ENCODE measurements at regions of chr17 and their contacts with region 1.

Region 1: GRCh38 chr17:59311130-59311920 is 20.1 kb upstream of the YPEL2 start:
- DNase-seq: peak in 1 of 2 donors; percentile 13
- H3K4me3 ChIP-seq: no peak overlapping the region
- H3K27ac ChIP-seq: no peak overlapping the region
- H3K4me1 ChIP-seq: no peaks in the 10 kb centered on the region
- H3K27me3 ChIP-seq: no peaks in the 10 kb centered on the region
- CTCF ChIP-seq: peak; percentile 48 to 95 (median 88)
- POLR2A ChIP-seq: no peak

Region 2: GRCh38 chr17:59406808-59407429 is 95.6 kb after region 1 on chr17:
- intact Hi-C with region 1: no loop called
- DNase-seq: peak; percentile 75 to 77
- H3K4me3 ChIP-seq: no peak overlapping the region
- H3K27ac ChIP-seq: peak overlapping the region; percentile 65 to 85 (median 77)
- H3K4me1 ChIP-seq: peaks cover 29 to 32% of the 10 kb centered on the region in 2 donors
- H3K27me3 ChIP-seq: no peaks in the 10 kb centered on the region
- CTCF ChIP-seq: peak in 1 of 6 experiments; percentile 7
- POLR2A ChIP-seq: peak in 1 of 2 donors; percentile 19

Region 3: GRCh38 chr17:59440784-59441441 is 129.6 kb after region 1 on chr17:
- intact Hi-C with region 1: loop called (anchors 2 kb)
- DNase-seq: peak; percentile 91 to 94
- H3K4me3 ChIP-seq: no peak overlapping the region
- H3K27ac ChIP-seq: peak overlapping the region; percentile 34 to 89 (median 86)
- H3K4me1 ChIP-seq: peaks cover 18 to 23% of the 10 kb centered on the region in 2 donors
- H3K27me3 ChIP-seq: no peaks in the 10 kb centered on the region
- CTCF ChIP-seq: peak; percentile 52 to 95 (median 81)
- POLR2A ChIP-seq: no peak

Region 4: GRCh38 chr17:59837308-59838051 is 526.2 kb after region 1 on chr17:
- intact Hi-C with region 1: no loop called
- DNase-seq: peak; percentile 87 to 89
- H3K4me3 ChIP-seq: peak overlapping the region in 2 of 3 donors; percentile 35 to 47
- H3K27ac ChIP-seq: peak overlapping the region; percentile 93 to 98 (median 97)
- H3K4me1 ChIP-seq: peaks cover 18 to 28% of the 10 kb centered on the region in 2 donors
- H3K27me3 ChIP-seq: no peaks in the 10 kb centered on the region
- CTCF ChIP-seq: no peak
- POLR2A ChIP-seq: peak; percentile 78 to 95